ENCODE measurements at regions of chr4 and their contacts with region 1.

Region 1: GRCh38 chr4:98745366-98745765 is 87.0 kb upstream of the TSPAN5 start:
- DNase-seq: no peak
- ATAC-seq: peak; percentile 66; the same call in 1 of the 2 replicates
- H3K4me3 ChIP-seq: no peak overlapping the region
- H3K27ac ChIP-seq: no peak overlapping the region
- H3K4me1 ChIP-seq: peaks cover 13 to 24% of the 10 kb centered on the region in 2 experiments
- H3K27me3 ChIP-seq: no peaks in the 10 kb centered on the region
- CTCF ChIP-seq: peak; percentile 45 to 54 (median 50); a peak in 5 of 6 replicates
- POLR2A ChIP-seq: no peak
- RAD21 ChIP-seq: peak; percentile 65

Region 2: GRCh38 chr4:98143001-98143899 is 602.1 kb before region 1 on chr4 and contains the start of gene STPG2:
- CTCF ChIA-PET with region 1: no interaction called
- POLR2A ChIA-PET with region 1: no interaction called
- RAD21 ChIA-PET with region 1: no interaction called
- intact Hi-C with region 1: loop called (anchors 10 kb)
- DNase-seq: peak; percentile 83
- ATAC-seq: peak; percentile 98
- H3K4me3 ChIP-seq: peak within 1 kb of the TSS; percentile 59 to 73
- H3K27ac ChIP-seq: peak within 1 kb of the TSS; percentile 83
- H3K4me1 ChIP-seq: peaks cover 10 to 20% of the 10 kb centered on the region in 2 experiments
- H3K27me3 ChIP-seq: no peaks in the 10 kb centered on the region
- CTCF ChIP-seq: peak; percentile 60 to 73 (median 68); a peak in 5 of 6 replicates
- POLR2A ChIP-seq: peak; percentile 9
- RAD21 ChIP-seq: peak; percentile 39
- total RNA-seq, gene STPG2: not detected

Region 3: DNA sequence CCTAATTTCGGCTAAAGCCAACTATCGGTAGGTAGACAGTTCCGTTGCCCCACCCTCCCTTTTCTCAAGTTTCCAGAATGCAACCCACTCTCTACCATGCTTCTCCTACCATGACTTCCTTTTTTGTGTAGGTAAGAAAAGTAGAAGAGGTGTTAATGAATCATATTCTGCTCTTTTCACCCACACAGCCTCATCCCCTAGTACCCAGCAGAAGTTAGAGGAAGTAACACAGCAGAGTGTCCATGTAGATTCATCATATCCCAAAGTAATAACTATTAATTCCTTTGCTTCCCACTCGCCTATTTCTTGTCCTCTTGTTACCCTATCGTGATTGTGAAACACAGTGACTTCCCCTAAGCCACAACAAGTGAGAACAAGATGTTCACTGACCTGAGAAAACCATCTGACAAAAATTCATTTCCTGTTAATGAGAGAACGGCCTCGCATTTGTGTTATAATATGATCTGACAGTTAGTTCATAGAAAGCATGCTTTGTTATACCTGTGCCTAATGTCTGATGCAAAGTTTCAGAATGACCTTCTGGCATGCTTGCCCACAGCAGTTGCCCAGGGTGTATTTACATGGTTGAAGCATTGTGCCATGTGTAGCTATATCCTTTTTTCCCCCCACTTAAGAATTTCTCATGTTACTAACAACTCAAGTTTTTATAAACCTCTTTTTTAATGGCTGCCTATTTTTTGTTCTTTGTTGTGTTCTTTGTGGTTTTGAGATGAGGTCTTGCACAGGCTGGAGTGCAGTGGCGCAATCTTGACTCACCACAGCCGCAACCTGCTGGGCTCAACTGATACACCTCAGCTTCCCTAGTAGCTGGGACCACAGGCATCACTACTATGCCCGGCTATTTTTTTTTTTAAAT is 298.6 kb before region 1 on chr4:
- CTCF ChIA-PET with region 1: no interaction called
- POLR2A ChIA-PET with region 1: no interaction called
- RAD21 ChIA-PET with region 1: no interaction called
- intact Hi-C with region 1: no loop called
- DNase-seq: no peak
- ATAC-seq: no peak
- H3K4me3 ChIP-seq: no peak overlapping the region
- H3K27ac ChIP-seq: no peak overlapping the region
- H3K4me1 ChIP-seq: no peaks in the 10 kb centered on the region
- H3K27me3 ChIP-seq: no peaks in the 10 kb centered on the region
- CTCF ChIP-seq: no peak
- POLR2A ChIP-seq: no peak
- RAD21 ChIP-seq: no peak

Region 4: GRCh38 chr4:98474408-98474844 is 270.9 kb before region 1 on chr4:
- CTCF ChIA-PET with region 1: no interaction called
- POLR2A ChIA-PET with region 1: no interaction called
- RAD21 ChIA-PET with region 1: no interaction called
- intact Hi-C with region 1: no loop called
- DNase-seq: no peak
- ATAC-seq: no peak
- H3K4me3 ChIP-seq: no peak overlapping the region
- H3K27ac ChIP-seq: no peak overlapping the region
- H3K4me1 ChIP-seq: peaks cover 0 to 4% of the 10 kb centered on the region in 2 experiments; a peak in 1 of 4 replicates
- H3K27me3 ChIP-seq: no peaks in the 10 kb centered on the region
- CTCF ChIP-seq: no peak
- POLR2A ChIP-seq: no peak
- RAD21 ChIP-seq: no peak

Region 5: DNA sequence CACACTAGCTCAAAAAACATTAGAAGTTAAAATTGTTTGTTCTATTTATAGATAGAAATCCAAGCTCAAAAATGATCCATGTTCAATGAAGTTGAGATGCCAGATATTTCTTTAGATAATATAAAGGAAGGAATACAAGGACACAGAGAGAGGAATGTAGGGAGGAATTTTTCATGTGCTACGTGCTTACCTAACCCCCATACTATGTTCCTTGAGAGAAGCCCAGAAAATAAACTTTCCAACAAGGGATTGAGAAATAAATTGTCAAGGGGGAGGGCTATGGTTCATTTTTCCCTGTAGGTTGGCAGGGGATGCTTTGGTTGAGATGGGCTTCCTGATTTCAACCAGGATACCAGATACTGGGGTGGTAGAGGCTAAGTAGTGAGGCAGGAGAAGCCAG is 358.8 kb after region 1 on chr4:
- CTCF ChIA-PET with region 1: no interaction called
- POLR2A ChIA-PET with region 1: no interaction called
- RAD21 ChIA-PET with region 1: no interaction called
- intact Hi-C with region 1: no loop called
- DNase-seq: no peak
- ATAC-seq: no peak
- H3K4me3 ChIP-seq: no peak overlapping the region
- H3K27ac ChIP-seq: no peak overlapping the region
- H3K4me1 ChIP-seq: no peaks in the 10 kb centered on the region
- H3K27me3 ChIP-seq: no peaks in the 10 kb centered on the region
- CTCF ChIP-seq: no peak
- POLR2A ChIP-seq: no peak
- RAD21 ChIP-seq: no peak

Measured in HCT116 (cell line).